Panc1 (cell line): ENCODE measurements at regions of chr7 and their contacts with region 1.

Region 1: GRCh38 chr7:64599355-64599754 is 36.5 kb upstream of the ZNF680 start:
- DNase-seq: no peak
- ATAC-seq: peak; percentile 62; the same call in 1 of the 2 replicates
- H3K4me3 ChIP-seq: no peak overlapping the region
- H3K27ac ChIP-seq: no peak overlapping the region
- H3K4me1 ChIP-seq: no peaks in the 10 kb centered on the region
- H3K27me3 ChIP-seq: no peaks in the 10 kb centered on the region
- CTCF ChIP-seq: peak; percentile 10; the same call in 1 of the 2 replicates

Region 2: GRCh38 chr7:64313740-64314491 is 285.4 kb before region 1 on chr7 and contains the start of gene ZNF736:
- CTCF ChIA-PET with region 1: no interaction called
- POLR2A ChIA-PET with region 1: interaction called, 12 read pairs
- in situ Hi-C with region 1: no loop called
- intact Hi-C with region 1: no loop called
- DNase-seq: peak; percentile 87
- ATAC-seq: peak; percentile 100
- H3K4me3 ChIP-seq: peak within 1 kb of the TSS; percentile 75 to 95
- H3K27ac ChIP-seq: peak within 1 kb of the TSS; percentile 91
- H3K4me1 ChIP-seq: peaks cover 4% of the 10 kb centered on the region
- H3K27me3 ChIP-seq: no peaks in the 10 kb centered on the region
- CTCF ChIP-seq: no peak
- total RNA-seq, gene ZNF736: 29.0 TPM

Region 3: GRCh38 chr7:64562626-64563275 is 36.6 kb before region 1 on chr7 and contains the start of gene ZNF680:
- CTCF ChIA-PET with region 1: no interaction called
- POLR2A ChIA-PET with region 1: no interaction called
- in situ Hi-C with region 1: no loop called
- intact Hi-C with region 1: no loop called
- DNase-seq: peak; percentile 91
- ATAC-seq: peak; percentile 99
- H3K4me3 ChIP-seq: peak within 1 kb of the TSS; percentile 89 to 90
- H3K27ac ChIP-seq: peak within 1 kb of the TSS; percentile 90
- H3K4me1 ChIP-seq: peaks cover 30% of the 10 kb centered on the region
- H3K27me3 ChIP-seq: no peaks in the 10 kb centered on the region
- CTCF ChIP-seq: no peak
- total RNA-seq, gene ZNF680: 21.3 TPM

Region 4: GRCh38 chr7:64650971-64651781 is 51.8 kb after region 1 on chr7:
- CTCF ChIA-PET with region 1: no interaction called
- POLR2A ChIA-PET with region 1: no interaction called
- in situ Hi-C with region 1: no loop called
- intact Hi-C with region 1: no loop called
- DNase-seq: no peak
- ATAC-seq: no peak
- H3K4me3 ChIP-seq: no peak overlapping the region
- H3K27ac ChIP-seq: no peak overlapping the region
- H3K4me1 ChIP-seq: no peaks in the 10 kb centered on the region
- H3K27me3 ChIP-seq: no peaks in the 10 kb centered on the region
- CTCF ChIP-seq: no peak; the same call in 1 of the 2 replicates

Region 5: DNA sequence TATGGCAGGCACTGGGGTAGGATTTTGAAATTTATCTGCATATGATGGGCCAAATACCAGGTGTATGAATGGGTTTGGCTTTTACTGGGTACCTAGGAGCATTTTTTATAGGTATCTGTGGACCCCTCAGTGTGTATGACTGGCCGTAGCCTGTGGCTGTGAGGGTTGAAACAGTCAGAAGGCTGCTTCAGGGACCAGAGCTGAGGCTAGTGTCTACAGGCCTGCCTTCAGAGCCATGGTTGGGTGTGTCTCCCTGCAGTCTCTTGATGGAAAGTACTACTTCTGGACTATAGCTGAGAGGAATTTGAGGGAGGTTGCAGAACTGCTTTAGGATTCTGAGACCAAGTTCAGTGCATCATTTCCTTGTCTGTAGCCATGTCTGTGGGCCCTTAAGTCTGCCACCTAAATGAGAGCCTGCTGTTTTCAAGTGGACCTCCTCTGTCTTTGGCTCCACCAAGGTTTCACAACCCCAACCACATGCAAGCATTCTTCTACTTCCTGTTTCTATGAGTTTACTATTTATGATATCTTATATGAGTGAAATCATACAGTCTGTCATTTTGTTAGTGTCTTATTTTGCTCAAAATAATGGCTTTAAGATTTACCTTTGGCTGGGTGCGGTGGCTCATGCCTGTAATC is 175.0 kb after region 1 on chr7:
- CTCF ChIA-PET with region 1: no interaction called
- POLR2A ChIA-PET with region 1: no interaction called
- in situ Hi-C with region 1: no loop called
- intact Hi-C with region 1: no loop called
- DNase-seq: no peak
- ATAC-seq: no peak
- H3K4me3 ChIP-seq: no peak overlapping the region
- H3K27ac ChIP-seq: no peak overlapping the region
- H3K4me1 ChIP-seq: no peaks in the 10 kb centered on the region
- H3K27me3 ChIP-seq: no peaks in the 10 kb centered on the region
- CTCF ChIP-seq: no peak